BJ (cell line): ENCODE measurements at regions of chr7 and their contacts with region 1.

Region 1: DNA sequence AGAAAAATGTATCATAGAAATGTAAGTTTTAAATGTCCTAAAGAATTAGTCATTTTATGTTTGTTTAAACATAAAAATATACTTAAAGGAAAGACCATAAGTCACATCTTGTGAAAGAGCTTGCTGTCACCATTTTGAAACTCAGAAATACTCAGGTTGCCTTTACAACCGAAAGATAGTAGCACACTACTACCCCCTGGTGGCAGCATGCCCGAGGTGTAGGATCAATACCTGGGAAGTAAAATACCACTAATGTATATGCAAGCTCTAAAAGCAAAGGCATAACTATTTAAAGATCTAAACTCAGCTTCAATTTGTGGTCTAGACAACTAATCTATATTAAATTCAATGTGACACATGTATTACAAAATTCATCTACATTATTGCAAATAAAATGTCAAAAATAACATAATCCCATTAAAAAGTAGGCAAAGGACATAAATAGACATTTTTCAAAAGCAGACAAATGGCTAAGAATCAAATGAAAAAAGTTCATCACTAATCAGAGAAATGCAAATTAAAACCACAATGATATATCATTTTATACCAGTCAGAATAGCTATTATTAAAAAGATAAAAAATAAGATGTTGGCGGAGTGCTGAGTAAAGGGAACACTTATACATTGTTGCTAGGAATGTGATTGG is 47.7 kb upstream of the FGL2 start:
- DNase-seq: no peak
- H3K4me3 ChIP-seq: no peak overlapping the region
- H3K27me3 ChIP-seq: no peaks in the 10 kb centered on the region
- CTCF ChIP-seq: peak; percentile 78

Region 2: DNA sequence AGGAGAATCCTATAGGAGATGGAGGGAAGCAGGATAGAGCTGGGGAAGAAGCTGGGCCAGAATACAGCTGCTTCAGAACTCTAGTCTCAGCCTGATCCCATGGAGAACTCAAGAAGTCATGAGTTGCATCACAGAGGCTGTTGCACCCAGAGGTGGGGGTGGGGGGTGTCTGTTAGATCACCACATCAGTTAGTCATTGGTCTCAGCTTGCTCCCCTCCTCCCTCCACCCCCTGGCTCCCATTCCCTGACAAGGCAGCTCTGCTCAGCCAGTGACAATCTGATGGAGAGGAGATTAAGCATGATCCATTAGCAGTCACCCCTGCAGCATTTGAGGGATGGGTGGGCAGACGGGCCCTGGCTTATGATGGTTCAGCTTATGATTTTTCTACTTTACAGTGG is 10.7 kb after region 1 on chr7:
- CTCF ChIA-PET with region 1: interaction called, 32 read pairs
- POLR2A ChIA-PET with region 1: no interaction called
- DNase-seq: no peak
- H3K4me3 ChIP-seq: no peak overlapping the region
- H3K27me3 ChIP-seq: no peaks in the 10 kb centered on the region
- CTCF ChIP-seq: no peak

Region 3: GRCh38 chr7:77335581-77335980 is 88.3 kb after region 1 on chr7:
- CTCF ChIA-PET with region 1: interaction called, 12 read pairs
- POLR2A ChIA-PET with region 1: no interaction called
- DNase-seq: no peak
- H3K4me3 ChIP-seq: no peak overlapping the region
- H3K27me3 ChIP-seq: no peaks in the 10 kb centered on the region
- CTCF ChIP-seq: no peak